Activated CD4-positive, alpha-beta T cell treated with anti-CD3 and anti-CD28 coated beads for 36 hours (primary cell): ENCODE measurements at regions of chr10 and their contacts with region 1.

Region 1: GRCh38 chr10:113678690-113679462 is 836 bp upstream of the CASP7 start:
- DNase-seq: peak; percentile 84
- ATAC-seq: peak; percentile 16
- H3K4me3 Mint-ChIP-seq: peak overlapping the region; percentile 80
- H3K27ac Mint-ChIP-seq: peak overlapping the region; percentile 74
- H3K4me1 Mint-ChIP-seq: peaks cover 39% of the 10 kb centered on the region
- H3K27me3 Mint-ChIP-seq: peaks cover 5% of the 10 kb centered on the region

Region 2: DNA sequence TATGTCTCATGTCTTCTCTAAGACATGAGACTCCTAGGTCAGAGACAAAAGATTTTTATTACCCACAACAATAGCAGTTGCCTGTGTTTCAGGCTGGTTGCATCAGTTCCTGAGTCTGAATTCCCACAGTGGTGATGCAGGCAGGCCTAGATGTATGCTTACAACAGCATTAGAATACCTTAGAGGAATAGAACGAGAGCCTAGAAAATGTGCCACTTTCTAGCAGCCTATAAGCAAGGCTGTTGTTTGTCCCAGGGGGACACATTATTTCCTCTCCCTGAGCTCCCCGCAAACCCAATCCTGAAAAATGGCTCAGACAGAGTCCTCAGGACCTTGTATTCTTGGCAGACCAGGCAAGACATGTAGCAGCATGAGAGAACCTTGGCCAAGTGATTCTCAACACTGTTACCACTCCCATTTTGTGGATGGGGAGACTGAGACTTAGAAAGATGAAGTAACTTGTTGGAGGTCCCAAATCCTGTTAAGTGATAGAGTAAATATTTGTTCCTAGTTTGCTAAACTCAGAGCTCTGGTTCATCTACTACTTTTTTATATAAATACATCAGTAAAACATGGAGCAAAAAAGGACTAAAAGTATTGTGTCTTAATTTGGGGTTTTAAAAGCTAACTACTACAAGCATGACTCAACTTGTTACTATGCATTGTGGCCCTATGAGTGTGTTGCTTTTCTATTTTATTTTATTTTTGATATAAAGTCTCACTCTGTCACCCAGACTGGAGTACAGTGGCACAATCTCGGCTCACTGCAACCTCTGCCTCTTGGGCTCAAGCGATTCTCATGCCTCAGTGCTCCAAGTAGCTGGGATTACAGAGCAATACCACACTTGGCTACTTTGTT is 1217.6 kb before region 1 on chr10:
- CTCF ChIA-PET with region 1: no interaction called
- POLR2A ChIA-PET with region 1: no interaction called
- intact Hi-C with region 1: loop called in 1 of 2 experiments (anchors 5 kb)
- DNase-seq: peak; percentile 80
- ATAC-seq: peak; percentile 89
- H3K4me3 Mint-ChIP-seq: no peak overlapping the region
- H3K27ac Mint-ChIP-seq: peak overlapping the region; percentile 95
- H3K4me1 Mint-ChIP-seq: peaks cover 33% of the 10 kb centered on the region
- H3K27me3 Mint-ChIP-seq: no peaks in the 10 kb centered on the region

Region 3: GRCh38 chr10:112532189-112532588 is 1146.7 kb before region 1 on chr10:
- CTCF ChIA-PET with region 1: no interaction called
- POLR2A ChIA-PET with region 1: no interaction called
- intact Hi-C with region 1: loop called in 1 of 2 experiments (anchors 5 kb)
- DNase-seq: peak; percentile 13
- ATAC-seq: peak; percentile 92
- H3K4me3 Mint-ChIP-seq: no peak overlapping the region
- H3K27ac Mint-ChIP-seq: no peak overlapping the region
- H3K4me1 Mint-ChIP-seq: peaks cover 32% of the 10 kb centered on the region
- H3K27me3 Mint-ChIP-seq: peaks cover 2% of the 10 kb centered on the region

Region 4: GRCh38 chr10:113854011-113854760 is 175.3 kb after region 1 on chr10 and contains the starts of genes DCLRE1A and NHLRC2:
- CTCF ChIA-PET with region 1: no interaction called
- POLR2A ChIA-PET with region 1: no interaction called
- intact Hi-C with region 1: loop called (anchors 1 to 5 kb)
- DNase-seq: peak; percentile 77
- ATAC-seq: peak; percentile 51
- H3K4me3 Mint-ChIP-seq: peak within 1 kb of the TSS; percentile 80
- H3K27ac Mint-ChIP-seq: peak within 1 kb of the TSS; percentile 97
- H3K4me1 Mint-ChIP-seq: peaks cover 39% of the 10 kb centered on the region
- H3K27me3 Mint-ChIP-seq: no peaks in the 10 kb centered on the region
- total RNA-seq, gene DCLRE1A: 12.5 to 14.4 TPM
- total RNA-seq, gene NHLRC2: 20.1 to 22.3 TPM

Region 5: DNA sequence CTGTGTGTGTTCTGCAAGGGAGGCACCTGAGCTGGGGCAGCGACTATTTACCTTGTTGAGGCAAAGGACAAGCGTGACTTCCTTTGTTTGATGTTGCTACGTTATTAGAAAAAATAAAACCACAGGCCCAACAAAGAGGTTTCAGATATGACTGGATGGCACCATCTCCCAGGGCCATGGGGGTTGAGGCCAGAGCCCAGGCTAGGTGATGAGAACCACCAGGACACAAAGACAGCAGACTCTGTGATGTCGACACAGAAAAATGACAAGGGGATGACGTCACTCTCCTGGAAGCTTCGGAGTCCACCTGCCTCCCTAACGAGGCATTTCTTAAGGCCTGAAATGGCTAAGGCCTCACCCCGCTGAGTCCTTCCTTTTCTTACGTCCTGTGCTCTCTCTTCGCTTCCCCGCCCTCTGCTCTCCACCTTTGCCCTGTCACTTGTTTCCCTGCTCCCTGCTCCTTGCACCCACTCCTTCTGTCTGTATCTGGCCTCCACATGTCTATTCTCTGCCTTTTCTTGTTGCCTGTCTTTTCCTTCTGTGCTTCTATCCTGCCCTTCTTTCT is 281.8 kb after region 1 on chr10:
- CTCF ChIA-PET with region 1: no interaction called
- POLR2A ChIA-PET with region 1: no interaction called
- intact Hi-C with region 1: loop called in 1 of 2 experiments (anchors 2 kb)
- DNase-seq: peak; percentile 46
- ATAC-seq: peak; percentile 13
- H3K4me3 Mint-ChIP-seq: peak overlapping the region; percentile 12
- H3K27ac Mint-ChIP-seq: no peak overlapping the region
- H3K4me1 Mint-ChIP-seq: peaks cover 48% of the 10 kb centered on the region
- H3K27me3 Mint-ChIP-seq: peaks cover 2% of the 10 kb centered on the region

Region 6: GRCh38 chr10:114173921-114174694 is 495.2 kb after region 1 on chr10 and contains the start of gene CCDC186:
- CTCF ChIA-PET with region 1: no interaction called
- POLR2A ChIA-PET with region 1: interaction called, 3 read pairs
- intact Hi-C with region 1: loop called (anchors 1 to 5 kb)
- DNase-seq: peak; percentile 99
- ATAC-seq: peak; percentile 100
- H3K4me3 Mint-ChIP-seq: peak within 1 kb of the TSS; percentile 100
- H3K27ac Mint-ChIP-seq: peak within 1 kb of the TSS; percentile 99
- H3K4me1 Mint-ChIP-seq: peaks cover 32% of the 10 kb centered on the region
- H3K27me3 Mint-ChIP-seq: no peaks in the 10 kb centered on the region
- total RNA-seq, gene CCDC186: 9.1 to 13.9 TPM

Region 7: GRCh38 chr10:114810926-114811325 is 1132.0 kb after region 1 on chr10:
- CTCF ChIA-PET with region 1: no interaction called
- POLR2A ChIA-PET with region 1: no interaction called
- intact Hi-C with region 1: no loop called
- DNase-seq: no peak
- ATAC-seq: peak; percentile 87
- H3K4me3 Mint-ChIP-seq: no peak overlapping the region
- H3K27ac Mint-ChIP-seq: no peak overlapping the region
- H3K4me1 Mint-ChIP-seq: peaks cover 20% of the 10 kb centered on the region
- H3K27me3 Mint-ChIP-seq: no peaks in the 10 kb centered on the region